ENCODE measurements at regions of chr5 and their contacts with region 1.

Region 1: DNA sequence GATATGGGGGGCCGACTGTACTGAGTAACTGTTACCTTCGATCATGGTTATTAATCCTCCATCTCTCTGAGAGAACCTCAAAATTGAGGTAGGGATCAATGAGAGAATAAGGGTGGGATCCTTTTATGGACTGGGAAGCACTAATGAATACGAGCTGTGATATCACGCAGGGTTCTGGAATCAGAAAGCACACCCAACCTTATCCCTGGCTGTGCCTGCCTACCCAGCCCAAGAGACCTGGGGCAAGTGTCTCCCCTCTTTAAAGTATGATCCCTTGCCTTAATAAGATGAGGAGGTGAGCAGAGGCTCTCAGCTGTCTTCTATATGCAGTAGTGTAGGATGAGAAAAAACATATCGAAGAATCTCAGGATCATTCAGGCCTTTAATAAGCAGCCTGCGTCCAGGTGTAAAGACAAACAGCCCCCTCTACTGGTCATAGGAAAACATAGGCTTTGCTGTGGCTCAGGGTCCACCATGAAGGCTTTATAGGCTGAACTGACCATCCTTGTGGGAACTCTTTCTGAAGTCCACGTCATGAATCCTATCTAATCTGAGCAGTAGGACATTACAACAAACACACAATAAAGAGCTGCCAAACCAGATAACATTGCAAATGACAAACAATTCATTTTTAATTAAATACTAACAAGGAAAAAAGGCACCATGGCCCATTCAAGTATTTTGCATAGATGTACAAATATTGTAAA is 16.8 kb downstream of the NIPAL4 start:
- DNase-seq: peak; percentile 54

Region 2: GRCh38 chr5:156850206-156850751 is 626.6 kb before region 1 on chr5 and contains the start of gene PPP1R2B:
- in situ Hi-C with region 1: no loop called
- DNase-seq: no peak
- total RNA-seq, gene PPP1R2B: not detected in 2 replicates

Region 3: GRCh38 chr5:157328277-157328912 is 148.5 kb before region 1 on chr5:
- in situ Hi-C with region 1: loop called (anchors 25 kb)
- DNase-seq: peak; percentile 58

Measured in Caki2 (cell line).